PC-3 (cell line): ENCODE measurements at regions of chr6 and their contacts with region 1.

Region 1: DNA sequence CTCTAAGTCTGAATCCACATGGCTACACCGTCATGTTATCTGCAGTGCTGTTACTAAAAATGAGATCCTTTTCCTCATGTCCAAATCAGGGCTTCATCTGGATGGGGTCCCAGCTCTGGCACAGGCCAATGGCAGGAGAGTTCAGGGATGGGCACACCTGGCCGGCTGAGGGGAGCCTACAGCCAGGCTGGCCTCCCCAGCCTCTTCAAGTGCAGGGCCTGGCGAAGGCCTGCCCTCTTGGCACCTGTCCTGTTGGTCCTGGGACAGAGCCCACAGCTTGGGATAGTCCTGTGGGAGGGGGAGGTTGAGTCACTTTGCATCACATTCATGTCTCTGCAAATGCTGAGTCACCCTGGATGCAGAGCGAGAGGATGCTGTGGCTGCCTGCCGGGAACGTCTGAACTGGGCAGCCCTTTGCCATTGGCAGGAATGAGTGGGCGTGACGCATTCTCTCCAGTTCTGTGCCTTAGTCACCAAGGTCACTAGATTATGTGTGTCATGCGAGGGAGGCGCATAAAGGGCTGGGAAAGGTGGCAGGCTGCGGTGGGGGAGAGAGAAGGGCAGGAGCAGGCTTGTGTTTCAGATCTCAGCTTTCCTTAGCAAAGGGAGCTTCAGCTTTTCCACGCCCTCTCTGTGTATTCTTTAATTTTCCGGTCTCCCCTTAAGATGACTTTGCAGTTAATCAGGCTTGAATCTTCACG is 223.2 kb upstream of the ECI2 start:
- DNase-seq: peak; percentile 100
- ATAC-seq: peak; percentile 89
- H3K4me3 ChIP-seq: peak overlapping the region; percentile 47
- H3K27ac ChIP-seq: peak overlapping the region; percentile 95
- H3K4me1 ChIP-seq: peaks cover 43% of the 10 kb centered on the region
- H3K27me3 ChIP-seq: no peaks in the 10 kb centered on the region
- CTCF ChIP-seq: no peak

Region 2: GRCh38 chr6:4281341-4282293 is 76.9 kb before region 1 on chr6:
- CTCF ChIA-PET with region 1: no interaction called
- POLR2A ChIA-PET with region 1: interaction called, 3 read pairs
- intact Hi-C with region 1: loop called (anchors 10 kb)
- DNase-seq: peak; percentile 81
- ATAC-seq: peak; percentile 76
- H3K4me3 ChIP-seq: peak overlapping the region; percentile 60
- H3K27ac ChIP-seq: 0 out of 2 replicates have a peak overlapping the region, but pooled peaks have one; percentile 5
- H3K4me1 ChIP-seq: peaks cover 16% of the 10 kb centered on the region
- H3K27me3 ChIP-seq: no peaks in the 10 kb centered on the region
- CTCF ChIP-seq: peak; percentile 66

Region 3: GRCh38 chr6:4369616-4370015 is 11.1 kb after region 1 on chr6:
- CTCF ChIA-PET with region 1: no interaction called
- POLR2A ChIA-PET with region 1: no interaction called
- intact Hi-C with region 1: loop called (anchors 1 kb)
- DNase-seq: peak; percentile 71
- ATAC-seq: peak; percentile 89
- H3K4me3 ChIP-seq: peak overlapping the region; percentile 53
- H3K27ac ChIP-seq: peak overlapping the region; percentile 96
- H3K4me1 ChIP-seq: peaks cover 26% of the 10 kb centered on the region
- H3K27me3 ChIP-seq: no peaks in the 10 kb centered on the region
- CTCF ChIP-seq: no peak

Region 4: DNA sequence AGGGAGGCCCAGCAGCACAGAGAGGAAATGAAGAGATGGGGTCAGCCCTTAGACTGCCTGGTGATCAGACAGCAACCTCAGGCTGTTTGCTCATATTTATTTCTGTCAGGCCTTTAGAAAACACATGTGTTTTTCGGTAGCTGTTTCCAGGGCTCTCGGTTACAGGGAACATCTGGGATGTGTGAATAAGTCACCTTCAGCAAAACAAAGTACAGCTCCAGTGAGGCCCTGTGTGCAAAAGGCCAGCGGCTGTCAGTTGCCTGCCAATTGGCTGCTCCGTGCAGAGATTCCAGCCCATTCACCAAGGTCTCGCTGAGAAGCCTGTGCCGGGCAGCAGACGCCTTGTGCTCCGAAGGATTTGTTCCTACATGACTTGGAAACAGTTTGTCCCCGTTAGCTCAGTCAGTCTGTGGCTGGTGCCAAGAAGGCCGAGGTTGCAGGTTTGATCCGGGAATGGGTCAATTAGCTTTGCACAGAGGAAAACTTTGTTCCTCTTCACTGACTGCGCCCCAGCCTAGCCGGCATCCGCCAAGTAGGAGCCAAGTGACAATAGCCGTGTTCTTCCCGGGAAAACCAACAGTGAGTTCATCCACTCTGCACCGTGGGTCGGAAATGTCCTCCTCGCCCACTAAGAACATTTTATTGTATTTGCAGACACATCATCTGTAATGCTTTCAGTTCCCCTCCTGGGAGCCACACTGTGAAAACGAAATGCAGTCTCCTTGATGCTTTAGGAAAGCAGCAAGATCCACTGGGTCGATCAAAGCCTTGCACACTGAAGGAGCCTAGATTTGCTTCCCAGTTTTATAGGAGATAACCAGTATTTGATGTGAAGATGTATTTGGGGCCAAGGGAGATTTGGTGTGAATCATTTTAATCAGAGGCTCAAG is 102.3 kb after region 1 on chr6:
- CTCF ChIA-PET with region 1: no interaction called
- POLR2A ChIA-PET with region 1: no interaction called
- intact Hi-C with region 1: loop called (anchors 10 kb)
- DNase-seq: no peak
- ATAC-seq: no peak
- H3K4me3 ChIP-seq: no peak overlapping the region
- H3K27ac ChIP-seq: no peak overlapping the region
- H3K4me1 ChIP-seq: peaks cover 11% of the 10 kb centered on the region
- H3K27me3 ChIP-seq: no peaks in the 10 kb centered on the region
- CTCF ChIP-seq: no peak

Region 5: DNA sequence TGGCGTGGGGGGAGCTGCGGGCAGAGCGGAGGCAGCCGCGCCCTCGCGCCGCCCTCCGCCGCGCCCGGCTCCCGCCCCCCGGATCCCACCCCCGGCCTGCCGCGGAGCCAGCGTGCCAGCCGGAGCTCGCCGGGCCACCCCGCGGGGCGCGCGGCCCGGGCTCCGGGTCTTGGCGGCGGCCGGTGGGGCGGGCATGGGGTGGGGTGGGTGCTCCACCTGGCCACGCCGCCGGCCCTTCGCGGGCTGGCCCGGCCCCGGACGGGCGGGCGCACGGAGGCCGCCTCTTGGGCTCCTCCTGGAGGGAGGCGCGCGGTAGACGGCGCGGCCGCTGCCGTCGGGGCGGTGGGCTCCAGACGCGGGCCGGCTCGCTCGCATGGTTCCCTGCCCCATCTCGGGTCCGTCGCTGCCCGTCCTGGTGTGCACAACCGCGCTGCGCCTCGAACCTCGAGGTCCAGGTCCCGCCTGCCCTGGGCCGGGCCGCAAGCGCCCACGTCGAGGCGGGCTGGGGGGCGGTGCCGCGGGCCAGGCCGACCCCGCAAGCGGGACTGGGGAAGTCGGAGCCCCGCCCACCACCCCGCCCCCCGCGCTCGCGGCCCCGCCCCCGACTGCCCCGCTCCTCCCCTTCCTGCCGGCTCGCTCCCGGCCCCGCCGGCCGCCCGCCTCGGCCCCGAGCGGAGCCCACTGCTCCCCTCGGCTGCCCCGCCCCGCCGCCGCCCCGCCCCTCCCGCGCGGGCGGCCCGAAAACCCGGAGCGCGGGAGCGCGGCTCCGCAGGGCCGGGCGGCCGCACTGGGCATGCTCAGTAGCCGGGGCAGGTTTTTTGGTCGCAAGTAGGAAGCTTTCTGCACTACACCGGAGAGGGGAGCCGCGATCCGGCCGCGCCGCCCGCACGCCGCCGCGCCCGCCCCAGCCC is 417.3 kb after region 1 on chr6 and contains the start of gene CDYL:
- CTCF ChIA-PET with region 1: no interaction called
- POLR2A ChIA-PET with region 1: no interaction called
- intact Hi-C with region 1: loop called (anchors 10 kb)
- DNase-seq: peak; percentile 94
- ATAC-seq: peak; percentile 79
- H3K4me3 ChIP-seq: peak within 1 kb of the TSS; percentile 74
- H3K27ac ChIP-seq: peak within 1 kb of the TSS; percentile 39; the same call in 1 of the 2 replicates
- H3K4me1 ChIP-seq: peaks cover 5% of the 10 kb centered on the region; the same call in 1 of the 2 replicates
- H3K27me3 ChIP-seq: no peaks in the 10 kb centered on the region
- CTCF ChIP-seq: peak; percentile 29; the same call in 1 of the 2 replicates
- total RNA-seq, gene CDYL: 34.4 and 38.4 TPM in 2 replicates